ENCODE measurements at regions of chr15 and their contacts with region 1.

Region 1: DNA sequence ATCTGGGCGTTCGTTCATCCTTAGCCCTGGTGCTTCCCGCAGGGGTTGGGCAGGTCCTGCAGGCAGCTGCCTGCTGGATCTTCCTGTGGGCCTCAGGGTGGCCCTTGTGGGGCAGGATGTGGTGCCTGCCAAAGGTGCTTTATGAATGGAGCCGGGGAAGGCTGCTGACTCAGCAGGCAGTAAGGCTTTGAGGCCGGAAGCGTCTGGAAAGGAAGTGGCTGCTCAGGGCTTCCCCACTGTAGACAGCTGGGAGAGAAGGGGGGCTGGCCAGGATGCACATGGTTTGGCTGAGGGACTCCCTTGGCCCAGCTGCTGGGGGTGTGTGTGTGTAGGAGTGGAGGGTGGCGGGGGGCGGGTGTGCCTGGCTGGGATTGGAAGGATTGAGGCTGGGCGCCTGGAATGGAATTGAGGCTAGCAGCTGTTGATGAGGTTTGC is 12.9 kb downstream of the CD276 start:
- DNase-seq: peak; percentile 95

Region 2: GRCh38 chr15:72865982-72866874 is 830.8 kb before region 1 on chr15:
- intact Hi-C with region 1: no loop called
- DNase-seq: no peak

Region 3: DNA sequence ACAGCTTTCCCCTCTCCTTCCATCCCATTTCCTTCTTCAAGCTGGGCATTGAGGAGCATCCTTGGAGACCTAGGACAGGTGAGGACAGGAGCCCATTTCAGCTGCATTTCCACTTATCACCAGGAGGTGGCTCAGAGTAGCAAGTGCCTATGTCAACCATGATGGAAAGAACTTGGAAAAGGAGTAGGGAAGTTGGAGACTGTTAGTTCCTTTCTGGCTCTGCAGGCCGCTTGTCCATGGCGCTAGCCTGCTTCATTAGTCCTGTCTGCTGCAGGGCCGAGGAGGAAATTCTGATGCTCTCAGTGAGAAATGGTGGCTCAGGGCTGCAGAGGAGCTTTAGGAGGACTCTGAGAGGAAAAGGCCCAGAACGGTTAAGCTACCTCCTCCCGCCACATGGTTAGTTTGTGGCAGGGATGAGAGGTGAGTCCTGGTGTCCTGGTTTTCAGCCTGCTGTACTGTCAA is 19.9 kb before region 1 on chr15:
- intact Hi-C with region 1: loop called (anchors 1 to 2 kb)
- DNase-seq: no peak

Region 4: GRCh38 chr15:73800662-73801345 is 103.8 kb after region 1 on chr15:
- intact Hi-C with region 1: no loop called
- DNase-seq: no peak

Region 5: GRCh38 chr15:73927476-73928240 is 230.6 kb after region 1 on chr15:
- intact Hi-C with region 1: loop called in 1 of 2 experiments (anchors 10 kb)
- DNase-seq: peak; percentile 91